ENCODE measurements at regions of chr12 and their contacts with region 1.

Region 1: DNA sequence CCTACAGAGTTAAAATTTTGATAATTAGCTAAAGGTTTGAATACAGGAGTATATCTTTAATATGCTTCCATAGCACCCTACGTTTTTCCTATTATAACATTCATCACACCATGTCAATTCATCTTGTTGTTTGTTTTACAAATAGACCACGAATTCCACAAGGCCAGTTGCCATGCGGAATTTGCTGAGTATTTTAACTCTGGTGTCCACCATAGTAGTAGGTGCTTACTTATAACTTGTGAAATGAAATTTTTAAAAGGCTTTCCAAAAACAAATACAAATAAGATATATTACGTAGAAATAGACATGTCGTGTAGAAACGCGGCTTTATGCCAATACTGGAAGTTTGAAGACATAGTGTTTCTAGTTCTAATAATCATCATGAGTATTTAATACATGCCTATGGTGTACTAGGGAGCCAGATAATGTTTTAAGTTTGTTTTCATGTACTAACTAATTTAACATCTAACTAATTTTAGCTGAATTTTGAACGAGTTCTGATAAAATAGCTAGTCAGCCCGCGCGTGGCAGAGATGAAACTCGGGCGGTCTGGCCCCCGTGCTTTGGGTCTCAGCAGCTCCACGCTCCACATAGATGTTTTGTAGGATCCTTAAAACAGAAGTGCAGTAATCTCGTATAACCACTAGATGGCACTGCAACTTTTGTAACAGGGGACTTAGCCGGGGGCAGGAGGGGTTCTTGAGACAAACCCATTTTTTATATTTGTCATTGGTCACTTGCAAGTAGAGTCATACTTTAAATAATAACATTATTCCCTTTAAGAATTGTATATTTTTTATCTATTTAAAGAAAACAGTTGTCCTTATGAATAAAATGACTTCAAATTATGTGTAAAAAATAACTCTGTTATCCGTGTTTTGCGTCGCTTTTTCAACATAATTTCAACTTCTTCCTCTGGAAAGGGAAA is 10.2 kb downstream of the CD69 start:
- DNase-seq: peak in 8 of 9 donors; percentile 51 to 78 (median 72)
- ATAC-seq: peak; percentile 73
- H3K4me3 ChIP-seq: no peak overlapping the region
- H3K4me3 Mint-ChIP-seq: peak overlapping the region; percentile 5 to 87 (median 76)
- H3K27ac ChIP-seq: peak overlapping the region; percentile 67
- H3K27ac Mint-ChIP-seq: peak overlapping the region; percentile 54 to 97 (median 81)
- H3K4me1 ChIP-seq: peaks cover 26 to 33% of the 10 kb centered on the region in 2 donors
- H3K4me1 Mint-ChIP-seq: peaks cover 19 to 61% (median 53%) of the 10 kb centered on the region in 7 donors
- H3K27me3 ChIP-seq: no peaks in the 10 kb centered on the region
- H3K27me3 Mint-ChIP-seq: peaks cover 0 to 4% (median 0%) of the 10 kb centered on the region in 5 donors

Region 2: DNA sequence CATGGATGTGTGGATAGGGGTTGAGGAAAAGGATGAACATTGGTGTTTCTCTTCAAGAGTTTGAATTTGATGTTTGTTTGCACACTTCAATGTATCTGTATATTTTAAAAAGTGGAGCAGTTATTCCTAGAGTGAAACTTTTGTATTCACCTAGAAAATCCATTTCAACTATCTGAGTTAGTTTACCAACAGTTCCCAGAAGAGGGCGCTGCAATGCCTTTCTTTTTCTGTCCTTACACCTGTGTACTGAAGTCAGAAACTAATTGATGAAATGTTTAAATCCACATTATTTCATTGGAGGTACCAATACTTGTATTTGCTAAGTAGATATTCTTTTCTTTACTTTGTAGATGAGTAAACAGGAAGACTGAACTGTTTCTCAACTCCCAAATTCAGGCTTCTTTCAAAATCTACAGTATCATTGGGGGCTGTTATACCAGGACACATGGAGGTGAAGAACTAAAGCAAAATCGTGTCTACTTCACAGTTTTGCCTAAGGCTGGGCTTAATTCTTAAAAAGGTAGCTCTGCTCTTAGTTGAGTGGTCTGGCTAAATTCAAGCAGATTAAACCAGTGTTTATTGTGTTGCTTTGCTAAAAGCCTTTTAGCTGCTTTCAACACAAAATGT is 116.2 kb before region 1 on chr12:
- CTCF ChIA-PET with region 1: interaction called, 30 read pairs
- POLR2A ChIA-PET with region 1: interaction called, 10 read pairs
- intact Hi-C with region 1: loop called (anchors 1 kb)
- DNase-seq: peak; percentile 45 to 84 (median 75)
- ATAC-seq: peak; percentile 90
- H3K4me3 ChIP-seq: no peak overlapping the region
- H3K4me3 Mint-ChIP-seq: peak overlapping the region in 9 of 10 donors; percentile 15 to 78 (median 73)
- H3K27ac ChIP-seq: peak overlapping the region; percentile 40
- H3K27ac Mint-ChIP-seq: peak overlapping the region; percentile 78 to 97 (median 91)
- H3K4me1 ChIP-seq: peaks cover 23 to 33% of the 10 kb centered on the region in 2 donors
- H3K4me1 Mint-ChIP-seq: peaks cover 24 to 80% (median 66%) of the 10 kb centered on the region in 7 donors
- H3K27me3 ChIP-seq: no peaks in the 10 kb centered on the region
- H3K27me3 Mint-ChIP-seq: peaks cover 0 to 20% (median 0%) of the 10 kb centered on the region in 5 donors

Region 3: GRCh38 chr12:9760699-9761418 is 10.3 kb after region 1 on chr12 and contains the start of gene CD69:
- CTCF ChIA-PET with region 1: interaction called, 84 read pairs
- POLR2A ChIA-PET with region 1: interaction called, 271 read pairs
- intact Hi-C with region 1: loop called in 1 of 2 experiments (anchors 1 kb)
- DNase-seq: peak; percentile 50 to 92 (median 85)
- ATAC-seq: peak; percentile 75
- H3K4me3 ChIP-seq: peak within 1 kb of the TSS; percentile 70
- H3K4me3 Mint-ChIP-seq: peak within 1 kb of the TSS; percentile 87 to 99 (median 97)
- H3K27ac ChIP-seq: peak within 1 kb of the TSS; percentile 98
- H3K27ac Mint-ChIP-seq: peak within 1 kb of the TSS; percentile 97 to 100 (median 100)
- H3K4me1 ChIP-seq: peaks cover 34 to 51% of the 10 kb centered on the region in 2 donors
- H3K4me1 Mint-ChIP-seq: peaks cover 31 to 65% (median 55%) of the 10 kb centered on the region in 7 donors
- H3K27me3 ChIP-seq: no peaks in the 10 kb centered on the region
- H3K27me3 Mint-ChIP-seq: no peaks in the 10 kb centered on the region
- total RNA-seq, gene CD69: 25.8 to 588 (median 125) TPM

Region 4: DNA sequence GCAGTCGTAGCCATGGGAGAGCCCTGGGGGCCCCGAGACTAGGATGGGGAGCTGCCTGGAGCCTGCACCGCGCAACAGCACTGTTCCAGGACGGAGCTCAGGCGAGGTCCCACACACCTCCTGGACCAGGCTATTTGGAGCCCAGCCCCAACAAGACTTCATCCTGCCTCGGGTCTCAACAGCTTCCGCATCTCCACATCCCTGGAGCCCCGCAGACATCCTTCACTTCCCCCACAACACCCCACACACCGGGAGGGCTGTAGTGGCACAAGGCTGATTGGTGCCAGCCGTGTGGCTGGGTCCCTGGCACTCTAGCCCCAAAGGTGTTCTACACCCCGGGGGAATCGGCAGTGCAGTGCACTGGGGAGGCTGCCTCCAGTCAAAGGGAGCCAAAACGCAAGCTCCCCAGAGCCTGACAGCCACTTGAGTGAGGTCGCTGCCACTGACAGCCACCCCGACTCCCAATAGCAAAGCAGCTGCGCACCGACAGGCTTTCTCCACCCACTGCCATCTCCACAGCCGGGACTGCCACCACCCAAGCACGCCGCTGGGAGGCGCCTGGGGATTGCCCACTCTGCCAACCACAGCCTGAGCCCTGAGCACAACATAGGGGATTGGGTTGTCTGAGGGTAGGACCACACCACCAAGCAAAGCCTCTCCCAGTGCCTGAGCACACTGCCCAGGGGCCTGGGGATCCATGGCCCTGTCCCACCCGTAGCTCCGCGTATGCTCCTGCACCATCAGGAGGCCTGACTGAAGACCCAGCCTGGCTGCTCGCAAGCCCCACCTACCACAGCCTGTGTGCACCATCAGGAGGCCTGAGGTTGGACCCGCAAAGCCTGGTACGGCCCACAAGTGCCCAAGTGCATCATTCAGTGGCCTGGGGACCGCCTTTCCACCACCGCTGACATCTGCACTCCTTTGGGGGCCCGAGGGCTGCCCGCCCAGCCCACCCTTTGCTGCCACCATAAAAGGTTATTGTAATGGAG is 63.6 kb after region 1 on chr12:
- CTCF ChIA-PET with region 1: interaction called, 36 read pairs
- POLR2A ChIA-PET with region 1: interaction called, 7 read pairs
- intact Hi-C with region 1: loop called (anchors 1 kb)
- DNase-seq: peak; percentile 85 to 98 (median 94)
- ATAC-seq: peak; percentile 99
- H3K4me3 ChIP-seq: peak overlapping the region; percentile 70
- H3K4me3 Mint-ChIP-seq: peak overlapping the region; percentile 85 to 97 (median 92)
- H3K27ac ChIP-seq: peak overlapping the region; percentile 71
- H3K27ac Mint-ChIP-seq: peak overlapping the region; percentile 75 to 97 (median 90)
- H3K4me1 ChIP-seq: no peaks in the 10 kb centered on the region
- H3K4me1 Mint-ChIP-seq: peaks cover 9 to 30% (median 14%) of the 10 kb centered on the region in 7 donors
- H3K27me3 ChIP-seq: no peaks in the 10 kb centered on the region
- H3K27me3 Mint-ChIP-seq: peaks cover 0 to 35% (median 5%) of the 10 kb centered on the region in 5 donors

Region 5: GRCh38 chr12:9933958-9934357 is 183.4 kb after region 1 on chr12:
- CTCF ChIA-PET with region 1: interaction called, 57 read pairs
- POLR2A ChIA-PET with region 1: no interaction called
- intact Hi-C with region 1: no loop called
- DNase-seq: no peak
- ATAC-seq: no peak
- H3K4me3 ChIP-seq: no peak overlapping the region
- H3K4me3 Mint-ChIP-seq: no peak overlapping the region
- H3K27ac ChIP-seq: no peak overlapping the region
- H3K27ac Mint-ChIP-seq: no peak overlapping the region
- H3K4me1 ChIP-seq: no peaks in the 10 kb centered on the region
- H3K4me1 Mint-ChIP-seq: no peaks in the 10 kb centered on the region
- H3K27me3 ChIP-seq: no peaks in the 10 kb centered on the region
- H3K27me3 Mint-ChIP-seq: peaks cover 0 to 27% (median 0%) of the 10 kb centered on the region in 5 donors

Region 6: GRCh38 chr12:10140001-10140400 is 389.5 kb after region 1 on chr12:
- CTCF ChIA-PET with region 1: interaction called, 36 read pairs
- POLR2A ChIA-PET with region 1: no interaction called
- intact Hi-C with region 1: loop called (anchors 1 kb)
- DNase-seq: peak in 7 of 9 donors; percentile 26 to 66 (median 49)
- ATAC-seq: peak; percentile 72
- H3K4me3 ChIP-seq: no peak overlapping the region
- H3K4me3 Mint-ChIP-seq: no peak overlapping the region
- H3K27ac ChIP-seq: no peak overlapping the region
- H3K27ac Mint-ChIP-seq: no peak overlapping the region
- H3K4me1 ChIP-seq: no peaks in the 10 kb centered on the region
- H3K4me1 Mint-ChIP-seq: peaks cover 0 to 3% (median 0%) of the 10 kb centered on the region in 7 donors
- H3K27me3 ChIP-seq: no peaks in the 10 kb centered on the region
- H3K27me3 Mint-ChIP-seq: peaks cover 0 to 51% (median 0%) of the 10 kb centered on the region in 5 donors